BJ (cell line): ENCODE measurements at regions of chr9 and their contacts with region 1.

Region 1: GRCh38 chr9:89597711-89598625 is 6.8 kb upstream of the GADD45G start:
- DNase-seq: no peak
- H3K4me3 ChIP-seq: no peak overlapping the region
- H3K27me3 ChIP-seq: peaks cover 3% of the 10 kb centered on the region; the same call in 1 of the 2 replicates
- CTCF ChIP-seq: peak; percentile 82

Region 2: GRCh38 chr9:89153232-89154017 is 444.5 kb before region 1 on chr9:
- CTCF ChIA-PET with region 1: no interaction called
- POLR2A ChIA-PET with region 1: no interaction called
- DNase-seq: peak; percentile 51
- H3K4me3 ChIP-seq: no peak overlapping the region
- H3K27me3 ChIP-seq: no peaks in the 10 kb centered on the region; the same call in 1 of the 2 replicates
- CTCF ChIP-seq: no peak

Region 3: DNA sequence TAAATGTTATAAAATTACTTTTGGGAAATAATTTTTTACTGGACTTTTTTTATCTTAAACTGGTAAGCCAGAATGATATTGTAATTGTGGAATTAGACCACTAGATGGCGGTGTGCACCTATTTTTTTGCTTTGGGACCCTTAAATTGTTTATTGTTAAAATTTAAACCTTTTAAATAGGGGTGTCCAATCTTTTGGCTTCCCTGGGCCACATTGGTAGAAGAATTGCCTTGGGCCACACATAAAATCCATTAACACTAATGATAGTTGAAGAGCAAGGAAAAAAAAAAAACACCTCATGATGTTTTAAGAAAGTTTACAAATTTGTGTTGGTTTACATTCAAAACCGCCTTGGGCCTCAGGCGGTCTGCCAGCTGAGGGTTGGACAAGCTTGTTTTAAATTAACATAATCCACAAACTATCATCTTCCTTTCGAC is 21.5 kb before region 1 on chr9:
- CTCF ChIA-PET with region 1: interaction called, 20 read pairs
- POLR2A ChIA-PET with region 1: no interaction called
- DNase-seq: no peak
- H3K4me3 ChIP-seq: no peak overlapping the region
- H3K27me3 ChIP-seq: no peaks in the 10 kb centered on the region; the same call in 1 of the 2 replicates
- CTCF ChIP-seq: peak; percentile 57

Region 4: GRCh38 chr9:90095682-90096081 is 497.7 kb after region 1 on chr9:
- CTCF ChIA-PET with region 1: interaction called, 166 read pairs
- POLR2A ChIA-PET with region 1: no interaction called
- DNase-seq: no peak
- H3K4me3 ChIP-seq: no peak overlapping the region
- H3K27me3 ChIP-seq: no peaks in the 10 kb centered on the region
- CTCF ChIP-seq: no peak

Region 5: GRCh38 chr9:90102292-90102901 is 504.4 kb after region 1 on chr9:
- CTCF ChIA-PET with region 1: interaction called, 166 read pairs
- POLR2A ChIA-PET with region 1: no interaction called
- DNase-seq: peak; percentile 19
- H3K4me3 ChIP-seq: no peak overlapping the region
- H3K27me3 ChIP-seq: no peaks in the 10 kb centered on the region
- CTCF ChIP-seq: peak; percentile 73